Posterior cingulate gyrus (tissue), 11 donors: ENCODE measurements at regions of chr3 and their contacts with region 1.

Region 1: GRCh38 chr3:81643721-81644120 is 117.7 kb downstream of the GBE1 start:
- DNase-seq: no peak

Region 2: GRCh38 chr3:81490541-81491288 is 153.0 kb before region 1 on chr3:
- intact Hi-C with region 1: loop called (anchors 10 kb)
- DNase-seq: peak in 8 of 10 donors; percentile 50 to 84 (median 65)

Region 3: DNA sequence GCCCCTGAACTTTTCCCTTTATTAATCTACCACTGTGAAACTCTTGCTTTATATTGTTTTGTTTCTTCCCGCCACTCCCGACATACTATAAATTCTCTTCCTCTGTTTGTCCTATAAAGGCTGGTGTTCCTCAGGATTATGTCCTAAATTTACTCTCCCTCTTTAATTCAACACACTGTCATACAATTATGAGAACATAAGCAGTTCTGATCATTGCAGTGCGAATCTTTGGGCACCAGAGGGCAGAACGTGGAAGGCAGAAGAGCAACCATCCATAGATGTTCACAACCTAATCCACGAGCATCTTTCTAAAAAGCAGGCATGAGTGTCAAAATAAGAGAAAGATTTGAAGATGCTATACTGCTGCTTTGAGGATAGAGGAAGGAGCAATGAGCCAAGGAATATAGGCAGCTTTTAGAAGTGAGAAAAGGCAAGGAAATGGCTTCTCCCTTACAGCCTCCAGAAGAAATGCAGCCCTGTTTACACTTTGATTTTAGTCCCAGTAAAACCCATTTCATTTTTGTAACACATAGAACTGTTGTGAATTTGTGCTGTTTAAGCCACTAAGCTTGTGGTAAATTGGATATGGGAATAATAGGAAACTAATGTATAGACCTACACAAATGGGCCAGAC is 61.6 kb before region 1 on chr3:
- intact Hi-C with region 1: no loop called
- DNase-seq: peak in 6 of 10 donors; percentile 6 to 81 (median 28)

Region 4: GRCh38 chr3:81908561-81908960 is 264.8 kb after region 1 on chr3:
- intact Hi-C with region 1: no loop called
- DNase-seq: no peak